A673 (cell line): ENCODE measurements at regions of chrX and their contacts with region 1.

Region 1: GRCh38 chrX:132957211-132958090 is 978 bp downstream of the HS6ST2 start:
- DNase-seq: peak; percentile 43
- H3K4me3 ChIP-seq: peak overlapping the region; percentile 48
- H3K27ac ChIP-seq: no peak overlapping the region
- H3K4me1 ChIP-seq: peaks cover 3% of the 10 kb centered on the region
- H3K27me3 ChIP-seq: peaks cover 41% of the 10 kb centered on the region
- CTCF ChIP-seq: no peak

Region 2: GRCh38 chrX:132518401-132518800 is 439.1 kb before region 1 on chrX:
- CTCF ChIA-PET with region 1: no interaction called
- POLR2A ChIA-PET with region 1: interaction called, 33 read pairs
- intact Hi-C with region 1: no loop called
- DNase-seq: no peak
- H3K4me3 ChIP-seq: no peak overlapping the region
- H3K27ac ChIP-seq: no peak overlapping the region
- H3K4me1 ChIP-seq: no peaks in the 10 kb centered on the region
- H3K27me3 ChIP-seq: peaks cover 12% of the 10 kb centered on the region
- CTCF ChIP-seq: no peak

Region 3: GRCh38 chrX:132848307-132848970 is 109.0 kb before region 1 on chrX:
- CTCF ChIA-PET with region 1: no interaction called
- POLR2A ChIA-PET with region 1: no interaction called
- intact Hi-C with region 1: no loop called
- DNase-seq: no peak
- H3K4me3 ChIP-seq: no peak overlapping the region
- H3K27ac ChIP-seq: no peak overlapping the region
- H3K4me1 ChIP-seq: no peaks in the 10 kb centered on the region
- H3K27me3 ChIP-seq: peaks cover under 1% of the 10 kb centered on the region
- CTCF ChIP-seq: no peak